Dorsolateral prefrontal cortex (tissue), 120 donors: ENCODE measurements at regions of chr17 and their contacts with region 1.

Region 1: GRCh38 chr17:1724506-1725362 is at the start of gene WDR81:
- DNase-seq: peak; percentile 88 to 94 (median 91)
- H3K4me3 ChIP-seq: peak within 1 kb of the TSS; percentile 63 to 95 (median 81)
- H3K27ac ChIP-seq: peak within 1 kb of the TSS; percentile 13 to 94 (median 84)
- H3K27me3 ChIP-seq: no peaks in the 10 kb centered on the region
- CTCF ChIP-seq: peak in 34 of 56 donors; percentile 8 to 63 (median 24)
- total RNA-seq, gene WDR81: 12.9 to 29.4 (median 19.8) TPM

Region 2: GRCh38 chr17:1769822-1770477 is 45.2 kb after region 1 on chr17:
- intact Hi-C with region 1: loop called in 1 of 2 experiments (anchors 5 kb)
- DNase-seq: no peak
- H3K4me3 ChIP-seq: no peak overlapping the region
- H3K27ac ChIP-seq: no peak overlapping the region
- H3K27me3 ChIP-seq: no peaks in the 10 kb centered on the region
- CTCF ChIP-seq: no peak

Region 3: GRCh38 chr17:1783834-1784611 is 59.3 kb after region 1 on chr17:
- intact Hi-C with region 1: loop called (anchors 2 kb)
- DNase-seq: peak in 4 of 10 donors; percentile 22 to 61 (median 39)
- H3K4me3 ChIP-seq: peak overlapping the region in 15 of 59 donors; percentile 0 to 27 (median 12)
- H3K27ac ChIP-seq: peak overlapping the region; percentile 7 to 94 (median 82)
- H3K27me3 ChIP-seq: no peaks in the 10 kb centered on the region
- CTCF ChIP-seq: peak in 55 of 56 donors; percentile 42 to 80 (median 61)

Region 4: GRCh38 chr17:1829592-1830257 is 105.0 kb after region 1 on chr17 and contains the starts of genes RPA1 and SMYD4:
- intact Hi-C with region 1: loop called in 1 of 2 experiments (anchors 5 kb)
- DNase-seq: peak; percentile 80 to 96 (median 86)
- H3K4me3 ChIP-seq: peak within 1 kb of the TSS; percentile 53 to 97 (median 86)
- H3K27ac ChIP-seq: peak within 1 kb of the TSS in 55 of 59 donors; percentile 36 to 89 (median 74)
- H3K27me3 ChIP-seq: no peaks in the 10 kb centered on the region
- CTCF ChIP-seq: peak in 14 of 56 donors; percentile 7 to 57 (median 16)
- total RNA-seq, gene RPA1: 54.2 to 102 (median 73.3) TPM
- total RNA-seq, gene SMYD4: 13.6 to 30.4 (median 20.5) TPM

Region 5: DNA sequence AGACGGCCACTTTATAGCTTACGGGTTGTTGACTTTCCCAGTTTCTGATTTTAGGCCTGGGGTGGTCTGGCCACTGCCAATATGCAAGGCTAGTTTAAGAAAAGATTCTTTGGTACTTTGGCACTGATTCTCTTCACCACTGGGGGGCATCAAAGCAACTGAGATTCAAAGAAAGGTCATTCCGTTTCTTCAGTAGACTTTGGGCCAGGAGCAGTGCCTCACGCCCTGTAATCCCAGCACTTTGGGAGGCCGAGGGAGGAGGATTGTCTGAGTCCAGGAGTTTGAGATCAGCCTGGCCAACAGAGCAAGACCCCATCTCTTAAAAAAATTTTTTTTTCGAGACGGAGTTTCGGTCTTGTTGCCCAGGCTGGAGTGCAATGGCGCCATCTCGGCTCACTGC is 158.1 kb after region 1 on chr17:
- intact Hi-C with region 1: loop called in 1 of 2 experiments (anchors 5 kb)
- DNase-seq: peak in 2 of 10 donors; percentile 35 to 42
- H3K4me3 ChIP-seq: no peak overlapping the region
- H3K27ac ChIP-seq: no peak overlapping the region
- H3K27me3 ChIP-seq: no peaks in the 10 kb centered on the region
- CTCF ChIP-seq: peak; percentile 29 to 71 (median 56)

Region 6: DNA sequence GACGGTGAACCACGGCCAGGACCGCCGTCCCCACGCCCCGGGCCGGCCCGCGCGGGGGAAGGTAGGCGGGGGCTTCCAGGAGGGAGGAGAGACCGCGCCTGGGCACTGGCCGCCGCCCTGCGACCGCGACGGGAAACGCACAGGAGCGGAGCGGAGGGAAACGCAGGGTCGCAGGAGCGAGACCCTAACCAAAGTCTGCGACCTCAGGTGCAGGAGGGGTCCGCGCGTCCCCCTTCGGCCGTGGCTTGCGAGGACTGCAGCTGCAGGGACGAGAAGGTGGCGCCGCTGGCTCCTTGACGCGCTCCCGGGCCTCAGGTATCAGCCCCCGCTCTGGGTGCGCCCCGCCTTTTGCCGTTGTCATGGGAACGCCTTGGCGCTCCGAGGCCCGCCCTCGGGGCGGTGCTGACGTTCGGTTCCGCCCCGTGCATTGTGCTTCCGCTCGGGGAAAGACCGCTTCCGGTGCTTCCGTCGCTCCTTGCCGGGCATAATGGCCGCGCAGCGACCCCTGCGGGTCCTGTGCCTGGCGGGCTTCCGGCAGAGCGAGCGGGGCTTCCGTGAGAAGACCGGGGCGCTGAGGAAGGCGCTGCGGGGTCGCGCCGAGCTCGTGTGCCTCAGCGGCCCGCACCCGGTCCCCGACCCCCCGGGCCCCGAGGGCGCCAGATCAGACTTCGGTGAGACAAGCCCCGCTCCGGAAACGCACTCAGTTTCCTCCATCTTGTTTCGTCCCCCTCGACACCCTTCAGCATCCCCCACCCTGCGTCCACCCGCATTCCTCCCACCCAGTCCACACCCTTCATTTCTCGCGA is 317.0 kb after region 1 on chr17 and contains the start of gene OVCA2:
- intact Hi-C with region 1: loop called in 1 of 2 experiments (anchors 10 kb)
- DNase-seq: peak; percentile 88 to 97 (median 94)
- H3K4me3 ChIP-seq: peak within 1 kb of the TSS; percentile 56 to 92 (median 82)
- H3K27ac ChIP-seq: peak within 1 kb of the TSS; percentile 43 to 96 (median 89)
- H3K27me3 ChIP-seq: no peaks in the 10 kb centered on the region
- CTCF ChIP-seq: peak; percentile 43 to 88 (median 73)
- total RNA-seq, gene OVCA2: 6.6 to 29.4 (median 16.4) TPM

Region 7: DNA sequence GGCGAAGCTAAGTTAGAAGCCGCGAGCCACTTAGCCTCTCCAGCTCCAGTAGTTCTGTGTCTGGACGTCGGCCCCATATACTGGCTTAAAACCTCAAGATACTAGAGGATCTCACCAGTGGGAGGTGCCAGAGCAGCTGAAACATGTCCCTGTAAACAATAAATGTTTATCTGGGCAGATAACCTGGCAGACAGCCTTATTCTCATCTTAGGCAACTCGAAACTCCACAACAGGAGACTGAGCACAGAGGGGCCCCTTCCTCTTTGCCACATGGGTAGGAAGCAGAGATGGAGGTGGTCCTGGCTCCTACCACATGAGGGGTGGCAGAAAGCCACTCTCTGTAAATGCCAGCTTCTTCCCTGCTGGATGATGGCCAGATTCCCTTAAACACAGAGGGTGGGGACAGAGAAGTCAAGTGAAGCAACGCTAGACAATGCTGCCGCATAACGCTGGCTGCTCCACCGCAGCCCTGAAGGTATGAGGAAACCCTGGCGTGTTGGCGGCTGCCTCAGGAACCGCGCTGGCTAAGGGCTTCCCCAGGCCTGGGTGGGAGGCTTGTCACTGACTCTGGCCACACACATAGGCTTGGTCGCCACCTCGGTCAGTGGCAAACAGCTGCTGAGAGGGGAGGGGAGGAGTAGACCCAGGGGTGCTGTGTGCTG is 398.0 kb after region 1 on chr17:
- intact Hi-C with region 1: no loop called
- DNase-seq: peak in 7 of 10 donors; percentile 11 to 54 (median 48)
- H3K4me3 ChIP-seq: peak overlapping the region in 31 of 59 donors; percentile 3 to 50 (median 20)
- H3K27ac ChIP-seq: peak overlapping the region in 44 of 59 donors; percentile 3 to 84 (median 57)
- H3K27me3 ChIP-seq: no peaks in the 10 kb centered on the region
- CTCF ChIP-seq: peak in 28 of 56 donors; percentile 9 to 42 (median 24)